ENCODE measurements at regions of chr2 and their contacts with region 1.

Region 1: GRCh38 chr2:112869258-112869885 is 32.8 kb upstream of the IL1B start:
- DNase-seq: peak; percentile 64
- H3K4me3 ChIP-seq: no peak overlapping the region
- H3K27ac ChIP-seq: no peak overlapping the region
- H3K4me1 ChIP-seq: peaks cover 12% of the 10 kb centered on the region
- H3K27me3 ChIP-seq: peaks cover 5 to 9% of the 10 kb centered on the region in 2 experiments
- CTCF ChIP-seq: no peak
- POLR2A ChIP-seq: no peak

Region 2: DNA sequence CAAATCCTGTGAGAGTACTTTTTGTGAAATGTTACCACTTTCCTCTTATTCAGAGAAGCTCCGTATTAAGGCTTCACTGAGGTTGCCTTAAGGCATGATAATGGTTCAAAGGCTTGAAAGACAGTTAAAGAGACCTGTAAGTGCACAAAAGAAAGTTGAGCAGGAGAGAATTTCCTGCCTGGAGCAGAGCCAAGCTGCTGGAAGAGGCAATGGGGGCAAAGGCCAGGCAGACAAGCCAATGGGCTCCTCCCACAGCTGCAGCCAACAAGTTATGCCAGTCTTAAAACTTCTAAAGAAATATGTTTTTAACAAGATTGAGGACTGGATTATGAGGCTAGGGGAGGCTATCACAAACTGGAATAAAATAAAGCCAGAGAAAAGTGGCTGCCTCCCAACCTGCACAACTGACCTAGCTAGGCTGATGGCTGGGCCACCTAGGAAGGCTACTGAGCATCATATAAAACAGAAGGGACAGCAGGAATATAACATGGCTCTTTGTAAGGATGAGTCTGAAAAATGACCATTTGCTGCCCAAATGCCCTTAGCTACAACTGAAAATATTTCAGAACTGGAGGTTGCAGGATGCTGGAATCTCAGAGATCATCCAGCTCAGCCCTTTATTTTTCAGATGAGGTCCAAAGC is 34.9 kb before region 1 on chr2:
- CTCF ChIA-PET with region 1: no interaction called
- POLR2A ChIA-PET with region 1: no interaction called
- dilution Hi-C with region 1: no loop called
- intact Hi-C with region 1: loop called (anchors 5 kb)
- DNase-seq: peak; percentile 28
- H3K4me3 ChIP-seq: no peak overlapping the region
- H3K27ac ChIP-seq: no peak overlapping the region
- H3K4me1 ChIP-seq: peaks cover 19% of the 10 kb centered on the region
- H3K27me3 ChIP-seq: peaks cover 0 to 12% of the 10 kb centered on the region in 2 experiments
- CTCF ChIP-seq: no peak
- POLR2A ChIP-seq: no peak

Region 3: GRCh38 chr2:112916145-112916571 is 46.8 kb after region 1 on chr2:
- CTCF ChIA-PET with region 1: no interaction called
- POLR2A ChIA-PET with region 1: no interaction called
- dilution Hi-C with region 1: no loop called
- intact Hi-C with region 1: no loop called
- DNase-seq: no peak
- H3K4me3 ChIP-seq: no peak overlapping the region
- H3K27ac ChIP-seq: no peak overlapping the region
- H3K4me1 ChIP-seq: no peaks in the 10 kb centered on the region
- H3K27me3 ChIP-seq: peaks cover 8 to 14% of the 10 kb centered on the region in 2 experiments
- CTCF ChIP-seq: no peak
- POLR2A ChIP-seq: no peak

Measured in endothelial cell of umbilical vein (primary cell).